ENCODE measurements at regions of chr17 and their contacts with region 1.

Region 1: DNA sequence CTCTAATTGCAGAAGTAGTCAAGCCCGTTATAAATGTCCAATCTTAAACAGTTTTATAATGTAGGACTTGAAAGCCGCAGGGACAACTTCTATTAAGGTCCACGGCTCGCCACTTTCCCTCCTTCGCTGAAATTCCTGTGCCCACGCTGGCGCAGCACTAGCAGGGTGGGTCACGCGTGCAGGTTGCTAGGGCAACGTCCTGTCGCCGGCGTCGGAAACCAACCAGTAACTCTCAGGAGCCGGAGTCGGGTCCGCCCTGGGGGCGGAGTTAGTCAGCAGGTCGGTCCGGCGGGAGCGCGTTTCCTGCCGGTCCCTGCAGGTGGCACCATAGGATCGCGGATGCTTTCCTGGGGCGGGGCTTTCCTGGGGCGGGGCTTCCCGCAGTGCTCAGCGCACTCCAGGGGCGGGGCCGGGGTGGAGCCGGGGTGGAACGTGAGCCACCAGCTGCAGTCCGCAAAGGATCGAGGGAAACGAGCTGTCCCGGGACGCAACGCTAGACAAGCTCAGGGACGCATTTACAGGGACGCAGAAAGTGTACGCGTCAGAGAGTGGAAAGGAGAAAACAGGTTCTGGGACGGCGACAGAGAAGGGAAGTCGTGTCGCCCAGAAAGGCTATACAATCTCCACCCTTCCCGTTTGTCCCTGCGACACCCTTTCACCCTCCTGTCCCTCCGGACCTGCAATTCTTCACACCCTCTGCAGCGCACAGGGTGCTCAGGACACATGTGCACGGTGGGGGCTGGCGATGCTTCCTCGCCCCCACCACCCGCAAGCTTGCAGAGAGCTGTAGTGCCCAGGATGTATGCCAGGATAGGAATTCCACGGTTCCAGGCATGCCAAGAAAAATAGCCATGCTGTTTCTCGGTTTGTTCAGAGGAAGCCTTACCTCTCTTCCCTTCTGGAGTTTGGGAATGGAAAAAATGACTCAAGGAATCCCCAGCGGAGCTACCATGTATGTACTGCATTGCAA is 12.4 kb downstream of the COPZ2 start:
- DNase-seq: peak; percentile 99
- ATAC-seq: peak; percentile 89
- H3K4me3 Mint-ChIP-seq: peak overlapping the region; percentile 77
- H3K27ac Mint-ChIP-seq: no peak overlapping the region
- H3K4me1 Mint-ChIP-seq: peaks cover 26% of the 10 kb centered on the region
- H3K27me3 Mint-ChIP-seq: peaks cover 25% of the 10 kb centered on the region

Region 2: GRCh38 chr17:47970704-47971463 is 54.3 kb before region 1 on chr17 and contains the start of gene CDK5RAP3:
- CTCF ChIA-PET with region 1: interaction called, 28 read pairs
- POLR2A ChIA-PET with region 1: no interaction called
- intact Hi-C with region 1: loop called in 1 of 2 experiments (anchors 2 kb)
- DNase-seq: peak; percentile 100
- ATAC-seq: peak; percentile 100
- H3K4me3 Mint-ChIP-seq: peak within 1 kb of the TSS; percentile 97
- H3K27ac Mint-ChIP-seq: peak within 1 kb of the TSS; percentile 94
- H3K4me1 Mint-ChIP-seq: peaks cover 21% of the 10 kb centered on the region
- H3K27me3 Mint-ChIP-seq: no peaks in the 10 kb centered on the region
- total RNA-seq, gene CDK5RAP3: 147 to 156 TPM

Region 3: GRCh38 chr17:48054238-48055185 is 29.3 kb after region 1 on chr17:
- CTCF ChIA-PET with region 1: interaction called, 42 read pairs
- POLR2A ChIA-PET with region 1: interaction called, 3 read pairs
- intact Hi-C with region 1: no loop called
- DNase-seq: no peak
- ATAC-seq: no peak
- H3K4me3 Mint-ChIP-seq: peak overlapping the region; percentile 48
- H3K27ac Mint-ChIP-seq: peak overlapping the region; percentile 99
- H3K4me1 Mint-ChIP-seq: peaks cover 62% of the 10 kb centered on the region
- H3K27me3 Mint-ChIP-seq: no peaks in the 10 kb centered on the region

Region 4: DNA sequence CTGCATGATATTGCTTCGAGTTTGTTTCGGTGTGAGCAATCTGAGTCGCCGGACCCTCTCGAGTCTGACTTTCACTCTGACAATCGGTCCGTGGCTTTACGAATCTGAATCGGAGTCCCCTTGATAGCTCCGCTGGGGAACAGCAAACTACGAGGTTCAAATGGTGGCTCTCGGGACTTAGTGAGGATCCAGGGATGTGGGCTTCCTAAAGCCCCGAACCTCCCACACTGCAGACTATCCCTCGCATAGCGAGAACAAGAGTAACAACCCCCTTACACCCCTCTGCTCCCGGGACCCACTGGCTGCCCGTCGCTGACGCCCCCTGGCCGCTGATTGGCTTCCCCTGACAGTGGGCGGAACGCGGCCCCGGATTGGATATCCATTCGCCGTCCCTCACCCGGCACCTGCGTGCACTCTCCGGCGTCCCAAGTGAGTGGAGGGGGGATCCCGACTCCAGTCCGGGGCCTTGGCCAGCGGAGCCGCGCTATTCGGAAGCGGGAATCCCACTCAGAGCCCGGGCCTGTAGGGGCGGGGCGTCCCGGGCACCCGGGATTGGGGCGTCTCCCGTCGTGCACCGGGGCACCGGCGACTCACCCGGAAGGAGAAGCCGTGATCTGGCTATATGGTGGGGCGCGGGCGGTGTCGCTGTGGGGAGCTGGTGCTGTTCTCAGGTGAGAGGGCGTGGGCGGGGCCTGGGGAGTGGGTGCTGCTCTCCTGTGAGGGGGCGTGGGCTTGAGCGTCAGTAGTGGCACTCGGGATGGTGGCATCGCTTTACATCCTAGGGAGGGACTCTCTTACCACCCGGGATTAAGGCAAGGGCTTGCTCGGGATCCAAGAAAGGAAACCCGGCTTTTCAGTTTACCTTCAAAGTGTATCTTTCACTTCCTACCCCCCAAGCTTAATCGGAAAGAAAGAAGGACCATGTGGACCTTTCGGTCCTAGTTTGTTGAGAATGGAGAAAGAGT is 82.2 kb after region 1 on chr17 and contains the start of gene SNX11:
- CTCF ChIA-PET with region 1: interaction called, 5 read pairs
- POLR2A ChIA-PET with region 1: interaction called, 3 read pairs
- intact Hi-C with region 1: loop called in 1 of 2 experiments (anchors 1 kb)
- DNase-seq: peak; percentile 97
- ATAC-seq: peak; percentile 87
- H3K4me3 Mint-ChIP-seq: peak within 1 kb of the TSS; percentile 97
- H3K27ac Mint-ChIP-seq: peak within 1 kb of the TSS; percentile 98
- H3K4me1 Mint-ChIP-seq: peaks cover 61% of the 10 kb centered on the region
- H3K27me3 Mint-ChIP-seq: no peaks in the 10 kb centered on the region
- total RNA-seq, gene SNX11: 18.0 to 21.4 TPM

Region 5: DNA sequence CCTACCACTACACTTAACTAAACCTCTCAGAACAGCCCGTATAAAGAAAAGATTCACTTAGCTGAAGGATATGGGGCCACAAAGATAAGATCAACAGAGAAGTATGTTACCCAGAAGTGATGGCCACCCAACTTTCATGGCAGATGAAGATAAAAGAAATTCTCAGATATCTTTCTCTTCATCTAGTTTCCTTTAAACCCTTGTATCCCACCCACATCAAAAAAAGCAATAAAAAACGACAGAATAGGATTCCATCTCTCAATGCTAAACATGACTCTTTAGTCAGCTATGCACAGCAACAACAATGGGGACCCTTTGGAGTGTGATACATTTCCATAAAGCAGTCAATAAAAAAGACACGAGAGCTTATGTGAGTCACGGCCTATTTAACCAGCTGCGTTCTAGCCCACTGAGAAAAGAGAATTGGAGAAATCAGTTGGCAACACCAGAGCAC is 168.9 kb after region 1 on chr17:
- CTCF ChIA-PET with region 1: no interaction called
- POLR2A ChIA-PET with region 1: no interaction called
- intact Hi-C with region 1: no loop called
- DNase-seq: no peak
- ATAC-seq: peak; percentile 51
- H3K4me3 Mint-ChIP-seq: no peak overlapping the region
- H3K27ac Mint-ChIP-seq: no peak overlapping the region
- H3K4me1 Mint-ChIP-seq: peaks cover 44% of the 10 kb centered on the region
- H3K27me3 Mint-ChIP-seq: no peaks in the 10 kb centered on the region

Region 6: GRCh38 chr17:48610282-48611211 is 585.3 kb after region 1 on chr17 and contains the start of gene HOXB7:
- CTCF ChIA-PET with region 1: interaction called, 3 read pairs
- POLR2A ChIA-PET with region 1: no interaction called
- intact Hi-C with region 1: loop called in 1 of 2 experiments (anchors 2 kb)
- DNase-seq: peak; percentile 83
- ATAC-seq: peak; percentile 40
- H3K4me3 Mint-ChIP-seq: peak within 1 kb of the TSS; percentile 82
- H3K27ac Mint-ChIP-seq: peak within 1 kb of the TSS; percentile 58
- H3K4me1 Mint-ChIP-seq: peaks cover 37% of the 10 kb centered on the region
- H3K27me3 Mint-ChIP-seq: peaks cover 63% of the 10 kb centered on the region
- total RNA-seq, gene HOXB7: 0.25 to 0.30 TPM

Measured in activated CD4-positive, alpha-beta T cell treated with anti-CD3 and anti-CD28 coated beads for 36 hours (primary cell).